ENCODE measurements at regions of chr1 and their contacts with region 1.

Region 1: DNA sequence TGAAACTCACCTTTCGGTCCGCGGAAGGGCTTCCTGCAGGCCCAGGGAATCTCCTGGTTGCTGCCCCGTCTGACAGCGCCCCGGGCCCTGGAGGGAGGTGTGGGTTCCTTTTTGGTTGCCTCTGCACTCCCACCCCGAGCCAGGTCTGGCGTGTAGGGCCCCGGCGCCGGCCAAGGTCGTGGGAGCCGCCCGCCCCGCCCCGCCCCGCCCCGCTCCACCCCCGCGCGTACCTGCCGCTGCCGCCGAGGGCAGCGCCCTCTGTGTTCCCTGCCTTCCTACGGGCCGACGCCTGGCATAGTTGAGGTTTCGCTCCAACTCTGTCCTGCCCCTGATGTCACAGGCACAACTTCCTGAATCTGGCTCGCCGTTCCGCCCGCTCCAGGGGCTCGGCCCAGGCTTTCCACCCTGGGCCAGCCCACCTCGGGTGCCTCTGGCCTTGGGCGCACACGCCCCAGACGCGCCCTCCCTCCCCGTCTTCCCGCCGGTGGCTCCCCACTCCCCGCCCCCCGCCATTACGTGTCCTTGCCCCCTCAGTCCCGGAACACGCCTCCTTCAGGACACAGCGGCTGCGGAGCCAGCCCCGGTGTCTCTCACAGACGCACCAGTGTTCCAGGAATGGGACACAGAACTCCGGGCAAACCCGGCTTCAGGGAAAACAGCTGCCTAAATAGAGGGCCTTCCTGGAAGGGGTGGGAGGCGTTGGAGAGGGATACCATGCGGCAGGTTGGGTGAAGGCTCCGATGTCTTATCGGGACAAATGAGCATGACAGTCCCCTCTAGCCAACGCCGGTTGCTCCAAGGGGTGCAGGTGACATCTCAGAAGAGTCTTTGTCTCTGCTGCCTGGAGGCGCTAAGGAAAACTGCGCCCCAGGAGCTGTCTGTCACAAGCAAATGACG is at the start of gene KIAA0040:
- DNase-seq: peak; percentile 5 to 68 (median 53)
- ATAC-seq: peak; percentile 61 to 70
- H3K4me3 Mint-ChIP-seq: peak within 1 kb of the TSS; percentile 95 to 99 (median 98)
- H3K27ac Mint-ChIP-seq: peak within 1 kb of the TSS; percentile 90 to 97 (median 94)
- H3K4me1 Mint-ChIP-seq: peaks cover 29 to 82% (median 50%) of the 10 kb centered on the region in 4 donors
- H3K27me3 Mint-ChIP-seq: no peaks in the 10 kb centered on the region
- polyA plus RNA-seq, gene KIAA0040: 26.0 to 32.5 (median 28.9) TPM

Region 2: GRCh38 chr1:175208773-175209492 is 16.1 kb after region 1 on chr1:
- POLR2A ChIA-PET with region 1: interaction called, 55 read pairs
- DNase-seq: peak in 9 of 10 donors; percentile 35 to 85 (median 67)
- ATAC-seq: peak; percentile 91 to 95
- H3K4me3 Mint-ChIP-seq: peak overlapping the region; percentile 75 to 91 (median 86)
- H3K27ac Mint-ChIP-seq: peak overlapping the region; percentile 55 to 98 (median 96)
- H3K4me1 Mint-ChIP-seq: peaks cover 29 to 86% (median 71%) of the 10 kb centered on the region in 4 donors
- H3K27me3 Mint-ChIP-seq: no peaks in the 10 kb centered on the region